Ascending aorta (tissue), 2 donors: ENCODE measurements at regions of chr9 and their contacts with region 1.

Region 1: GRCh38 chr9:33167046-33167808 is at the start of gene B4GALT1:
- DNase-seq: peak; percentile 82 to 98
- H3K4me3 ChIP-seq: peak within 1 kb of the TSS; percentile 85 to 90
- H3K27ac ChIP-seq: peak within 1 kb of the TSS; percentile 98 to 99
- H3K4me1 ChIP-seq: peaks cover 10 to 34% of the 10 kb centered on the region in 2 donors
- H3K27me3 ChIP-seq: no peaks in the 10 kb centered on the region
- CTCF ChIP-seq: no peak
- total RNA-seq, gene B4GALT1: 100 TPM

Region 2: GRCh38 chr9:33180526-33181184 is 13.4 kb after region 1 on chr9:
- intact Hi-C with region 1: loop called (anchors 1 kb)
- DNase-seq: peak in 1 of 2 donors; percentile 77
- H3K4me3 ChIP-seq: no peak overlapping the region
- H3K27ac ChIP-seq: peak overlapping the region; percentile 85 to 88
- H3K4me1 ChIP-seq: peaks cover 0 to 25% of the 10 kb centered on the region in 2 donors
- H3K27me3 ChIP-seq: no peaks in the 10 kb centered on the region
- CTCF ChIP-seq: no peak

Region 3: DNA sequence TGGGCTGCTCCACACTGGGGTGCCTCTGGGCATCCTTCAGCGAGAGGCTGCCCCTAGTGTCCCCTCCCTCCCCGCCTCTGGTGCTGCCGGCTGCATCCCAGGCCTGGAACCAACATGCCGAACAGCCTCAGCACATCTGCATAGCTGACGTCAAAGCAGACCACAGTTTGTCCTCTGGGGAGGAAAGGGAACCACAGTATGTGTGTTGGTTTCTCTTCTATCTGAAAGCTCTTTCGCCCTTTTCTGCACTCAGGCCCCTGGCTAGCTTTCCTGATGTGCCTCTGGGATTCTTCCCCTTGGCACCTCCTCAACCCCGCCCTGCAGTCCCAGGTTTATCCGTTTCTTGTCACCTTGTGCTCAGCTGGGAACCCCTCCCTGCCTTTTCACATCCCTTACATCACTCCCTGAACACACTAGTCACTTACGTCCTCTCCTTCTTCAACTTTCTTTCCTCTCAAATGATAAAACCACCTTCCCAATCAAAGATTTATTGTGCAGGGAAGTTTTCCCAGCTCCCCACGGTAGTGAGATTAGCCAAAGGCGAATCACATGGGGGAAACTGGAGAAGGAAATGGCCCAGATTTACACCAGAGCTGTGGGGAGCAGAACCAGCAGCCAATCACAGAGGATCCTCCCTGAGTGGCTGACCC is 35.5 kb after region 1 on chr9:
- intact Hi-C with region 1: loop called (anchors 1 kb)
- DNase-seq: peak; percentile 40 to 82
- H3K4me3 ChIP-seq: no peak overlapping the region
- H3K27ac ChIP-seq: no peak overlapping the region
- H3K4me1 ChIP-seq: peaks cover 0 to 4% of the 10 kb centered on the region in 2 donors
- H3K27me3 ChIP-seq: no peaks in the 10 kb centered on the region
- CTCF ChIP-seq: no peak

Region 4: GRCh38 chr9:33225319-33226149 is 58.3 kb after region 1 on chr9:
- intact Hi-C with region 1: loop called (anchors 2 kb)
- DNase-seq: peak in 1 of 2 donors; percentile 86
- H3K4me3 ChIP-seq: no peak overlapping the region
- H3K27ac ChIP-seq: peak overlapping the region in 1 of 2 donors; percentile 24
- H3K4me1 ChIP-seq: peaks cover 0 to 5% of the 10 kb centered on the region in 2 donors
- H3K27me3 ChIP-seq: no peaks in the 10 kb centered on the region
- CTCF ChIP-seq: peak; percentile 62 to 76 (median 75)